ENCODE measurements at regions of chr2 and their contacts with region 1.

Region 1: GRCh38 chr2:160920791-160921303 is 239.4 kb upstream of the TANK start:
- DNase-seq: peak; percentile 31 to 54
- ATAC-seq: peak; percentile 52 to 75 (median 58)
- H3K4me3 ChIP-seq: no peak overlapping the region
- H3K27ac ChIP-seq: no peak overlapping the region
- H3K4me1 ChIP-seq: peaks cover 9% of the 10 kb centered on the region
- H3K27me3 ChIP-seq: no peaks in the 10 kb centered on the region
- CTCF ChIP-seq: no peak

Region 2: GRCh38 chr2:160869411-160869810 is 51.4 kb before region 1 on chr2:
- intact Hi-C with region 1: loop called in 1 of 2 experiments (anchors 10 kb)
- DNase-seq: no peak
- ATAC-seq: peak; percentile 40 to 83 (median 66)
- H3K4me3 ChIP-seq: no peak overlapping the region
- H3K27ac ChIP-seq: no peak overlapping the region
- H3K4me1 ChIP-seq: no peaks in the 10 kb centered on the region
- H3K27me3 ChIP-seq: peaks cover 0 to 3% (median 0%) of the 10 kb centered on the region in 3 donors
- CTCF ChIP-seq: no peak

Measured in psoas muscle (tissue), 8 donors.